ENCODE measurements at regions of chr17 and their contacts with region 1.

Region 1: DNA sequence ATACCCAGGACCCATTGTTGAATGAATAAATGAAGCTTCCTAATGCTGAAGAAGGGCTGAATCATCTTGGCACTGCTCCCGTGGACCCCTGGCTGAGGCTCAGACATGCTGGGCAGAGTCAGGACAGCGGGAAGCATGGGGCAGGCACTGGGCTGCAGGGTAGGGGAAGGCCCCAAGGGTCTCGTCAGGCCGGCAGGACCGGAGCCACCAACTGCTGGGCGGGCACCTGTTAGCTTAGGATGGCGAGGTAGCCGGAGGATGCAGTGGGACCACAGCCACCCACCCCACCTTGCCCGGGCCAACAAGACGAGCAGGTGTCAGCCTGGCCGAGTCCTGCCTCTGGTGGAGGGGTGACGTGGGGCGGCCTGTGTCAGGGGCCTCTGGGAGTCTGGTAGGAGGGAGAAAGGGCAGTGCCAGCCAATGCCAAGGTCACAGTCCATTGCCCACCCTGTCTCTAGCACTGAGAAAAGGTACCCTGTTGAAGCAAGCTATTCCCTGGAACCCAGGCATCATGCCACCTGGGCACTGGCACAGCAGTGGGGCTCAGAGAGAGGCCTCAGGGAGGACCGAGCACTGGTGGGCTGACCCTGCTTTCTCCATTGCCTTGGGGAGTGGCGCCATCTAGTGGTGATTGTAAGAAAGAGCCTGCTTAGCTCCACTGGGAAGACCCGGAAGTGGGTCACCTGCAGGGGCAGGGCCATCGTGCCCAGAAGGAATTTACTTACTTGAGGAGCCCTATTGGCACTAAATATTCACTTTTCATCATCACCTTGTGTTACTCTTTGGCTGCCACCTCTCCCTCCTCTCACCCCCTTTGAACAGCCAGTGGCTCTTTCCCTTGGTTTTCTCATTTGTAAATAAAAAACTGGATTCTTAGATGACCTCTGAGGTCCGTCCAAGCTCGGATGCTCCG is 3.0 kb upstream of the DLX3 start:
- DNase-seq: peak; percentile 10
- H3K4me3 ChIP-seq: no peak overlapping the region
- CTCF ChIP-seq: peak; percentile 85

Region 2: GRCh38 chr17:49707608-49708514 is 290.2 kb before region 1 on chr17 and contains the start of gene SLC35B1:
- CTCF ChIA-PET with region 1: interaction called, 103 read pairs
- POLR2A ChIA-PET with region 1: no interaction called
- DNase-seq: peak; percentile 93
- H3K4me3 ChIP-seq: peak within 1 kb of the TSS; percentile 91
- CTCF ChIP-seq: peak; percentile 89

Region 3: GRCh38 chr17:49871211-49871610 is 126.8 kb before region 1 on chr17:
- CTCF ChIA-PET with region 1: interaction called, 753 read pairs
- POLR2A ChIA-PET with region 1: no interaction called
- DNase-seq: no peak
- H3K4me3 ChIP-seq: no peak overlapping the region
- CTCF ChIP-seq: no peak

Region 4: DNA sequence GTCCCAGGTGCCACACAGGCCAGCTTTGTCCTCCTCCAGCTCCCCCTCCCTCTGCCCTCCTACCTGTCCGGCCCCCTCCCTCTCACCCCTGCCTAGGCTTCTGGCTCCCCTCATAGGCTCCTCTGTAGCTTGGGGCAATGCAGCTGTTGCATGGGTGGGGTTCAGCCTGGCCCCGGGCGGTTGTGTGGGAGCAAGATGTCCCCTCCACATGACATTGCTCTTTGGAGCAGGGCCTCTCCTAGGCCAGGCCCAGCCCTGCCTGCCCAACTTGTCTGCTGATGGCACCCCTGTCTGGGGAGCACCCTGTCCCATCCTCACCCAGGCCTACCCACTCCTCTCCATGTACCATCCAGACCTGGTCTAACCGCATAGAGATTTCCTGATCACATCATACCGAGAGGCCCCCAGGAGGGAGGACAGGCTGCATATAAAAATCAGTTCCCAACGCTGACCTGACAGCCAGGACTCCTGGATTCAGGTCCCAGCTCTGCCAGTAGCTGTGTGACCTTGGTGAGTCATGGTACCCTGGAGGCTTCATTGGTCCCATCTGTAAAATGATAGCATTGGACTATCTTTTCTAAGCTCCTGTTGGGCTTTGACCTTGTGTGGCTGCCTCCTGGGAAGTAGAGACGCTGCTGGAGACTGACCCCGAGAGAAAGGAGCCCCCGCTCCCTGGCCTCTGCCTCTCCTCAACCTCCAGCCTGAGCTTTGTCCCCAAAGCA is 77.8 kb before region 1 on chr17:
- CTCF ChIA-PET with region 1: interaction called, 33 read pairs
- POLR2A ChIA-PET with region 1: no interaction called
- DNase-seq: no peak
- H3K4me3 ChIP-seq: no peak overlapping the region
- CTCF ChIP-seq: no peak

Region 5: GRCh38 chr17:49971848-49972485 is 26.1 kb before region 1 on chr17:
- CTCF ChIA-PET with region 1: interaction called, 266 read pairs
- POLR2A ChIA-PET with region 1: no interaction called
- DNase-seq: no peak
- H3K4me3 ChIP-seq: no peak overlapping the region
- CTCF ChIP-seq: no peak

Region 6: DNA sequence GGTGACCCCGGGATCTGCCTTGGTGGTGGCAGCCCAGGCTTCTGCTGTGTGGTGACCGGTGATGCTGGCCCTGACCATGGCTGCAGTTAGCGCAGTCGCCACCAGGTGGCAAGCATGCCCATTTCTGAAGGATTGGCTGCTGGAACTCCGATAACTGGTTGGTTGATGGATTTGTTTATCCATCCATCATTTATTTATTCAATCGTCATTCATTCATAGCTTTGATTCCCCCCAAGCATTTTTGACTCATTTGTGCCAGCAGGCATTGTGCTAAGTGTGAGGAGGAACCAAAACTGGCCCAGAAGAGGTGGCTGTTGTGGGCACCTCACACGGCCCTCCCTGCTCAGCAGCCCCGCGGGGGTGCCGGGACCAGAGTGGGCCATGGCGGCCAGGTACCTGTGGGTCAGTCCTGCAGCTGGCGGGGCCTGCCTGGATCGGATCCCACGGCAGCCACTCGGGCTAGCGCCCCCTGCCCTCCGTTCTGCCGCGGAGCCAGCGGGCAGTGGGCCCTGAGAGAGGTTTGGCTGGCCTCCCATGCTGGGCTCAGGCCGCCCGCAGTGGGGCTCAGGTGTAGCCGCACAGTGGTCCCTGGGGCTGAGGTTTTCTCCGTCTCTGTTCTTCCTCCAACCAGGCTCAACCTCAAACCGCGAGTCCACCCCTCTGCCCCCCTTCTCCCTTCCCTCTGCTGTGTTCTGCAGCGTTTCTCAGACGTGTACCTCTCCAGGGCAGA is 29.0 kb after region 1 on chr17:
- CTCF ChIA-PET with region 1: interaction called, 29 read pairs
- POLR2A ChIA-PET with region 1: no interaction called
- DNase-seq: no peak
- H3K4me3 ChIP-seq: peak overlapping the region; percentile 51
- CTCF ChIP-seq: peak; percentile 95

Region 7: DNA sequence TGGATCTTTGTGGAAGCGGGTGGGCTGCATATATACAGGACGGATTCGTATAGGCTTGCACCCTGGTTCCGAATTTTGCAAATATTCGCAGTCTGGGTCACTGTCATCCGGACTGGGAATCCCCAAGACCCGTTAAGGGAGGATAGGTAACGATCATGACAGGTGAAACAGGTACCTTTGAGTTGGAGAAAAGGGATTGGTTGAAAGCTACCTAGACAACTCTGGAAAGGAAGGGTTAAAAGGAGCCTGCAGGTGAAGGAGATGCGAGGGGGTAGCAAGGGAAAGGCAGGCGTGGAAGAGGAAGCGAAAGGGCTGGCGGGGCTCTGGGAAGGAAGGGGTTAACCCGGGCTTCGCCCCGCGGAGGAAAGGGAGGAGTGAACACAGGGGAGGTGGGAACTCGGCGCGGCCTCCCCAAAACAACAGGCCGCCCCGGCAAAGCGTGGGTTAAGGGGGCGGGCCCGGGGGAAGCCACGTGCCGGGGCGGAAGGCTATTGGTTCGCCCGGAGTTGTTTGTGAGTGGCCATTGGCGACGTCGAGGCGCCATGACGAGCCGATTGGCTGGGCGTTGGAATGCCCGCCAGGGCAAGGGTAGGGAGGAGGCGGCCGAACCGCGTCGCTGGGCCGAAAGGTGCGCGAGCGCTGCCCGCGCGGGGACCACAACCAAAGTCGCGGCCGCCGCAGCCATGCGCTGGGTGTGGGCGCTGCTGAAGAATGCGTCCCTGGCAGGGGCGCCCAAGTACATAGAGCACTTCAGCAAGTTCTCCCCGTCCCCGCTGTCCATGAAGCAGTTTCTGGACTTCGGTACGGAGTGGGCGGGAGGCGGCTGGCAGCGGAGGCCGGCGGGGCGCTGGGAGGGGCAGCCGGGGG is 96.9 kb after region 1 on chr17 and contains the start of gene PDK2:
- CTCF ChIA-PET with region 1: interaction called, 22 read pairs
- POLR2A ChIA-PET with region 1: no interaction called
- DNase-seq: peak; percentile 47
- H3K4me3 ChIP-seq: peak within 1 kb of the TSS; percentile 89
- CTCF ChIP-seq: no peak

Region 8: GRCh38 chr17:50139950-50140871 is 142.2 kb after region 1 on chr17:
- CTCF ChIA-PET with region 1: no interaction called
- POLR2A ChIA-PET with region 1: no interaction called
- DNase-seq: no peak
- H3K4me3 ChIP-seq: no peak overlapping the region
- CTCF ChIP-seq: peak; percentile 94

Region 9: DNA sequence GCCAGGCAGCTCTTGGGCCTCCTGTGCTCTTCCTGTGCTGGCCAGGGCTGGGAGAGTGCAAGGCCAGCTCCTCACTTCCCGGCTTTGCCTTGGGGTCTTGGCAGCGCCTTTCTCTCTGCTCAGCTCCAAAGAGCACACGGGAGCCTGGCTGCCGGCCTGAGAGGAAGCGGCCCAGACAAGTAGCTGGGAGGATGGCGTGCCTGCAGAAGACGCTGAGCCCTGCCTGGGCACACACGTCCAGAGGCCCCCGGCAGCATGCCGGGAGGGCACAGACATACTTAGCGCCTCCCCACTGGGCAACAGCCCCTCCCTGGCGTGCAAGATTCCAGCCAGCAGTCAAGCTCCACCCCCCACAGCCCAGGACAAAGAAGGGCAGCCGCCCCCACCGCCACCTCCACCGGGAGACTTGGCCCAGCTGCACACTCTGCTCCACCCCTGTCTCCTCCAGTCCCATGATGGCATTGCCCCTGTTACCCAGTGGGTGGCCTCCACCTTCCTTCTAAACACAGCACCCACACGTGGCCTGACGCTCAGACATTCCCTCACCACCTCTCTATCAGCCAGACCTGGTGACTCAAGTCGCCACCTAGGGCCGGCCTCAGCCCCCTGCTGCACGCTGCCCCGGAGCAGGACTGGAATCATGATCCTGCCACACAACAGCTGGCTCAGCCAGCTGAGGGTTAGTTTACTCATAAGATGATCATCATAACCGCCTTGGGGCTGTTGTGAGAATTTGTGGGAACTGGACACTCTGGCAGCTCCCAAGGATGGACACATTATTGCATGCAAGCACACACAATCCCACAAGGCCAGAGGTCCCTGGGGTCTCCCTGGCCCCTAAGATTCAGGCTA is 180.2 kb after region 1 on chr17:
- CTCF ChIA-PET with region 1: no interaction called
- POLR2A ChIA-PET with region 1: no interaction called
- DNase-seq: no peak
- H3K4me3 ChIP-seq: no peak overlapping the region
- CTCF ChIP-seq: peak; percentile 71

Measured in AG04449 (cell line).